Activated CD8-positive, alpha-beta memory T cell treated with anti-CD3 and anti-CD28 coated beads, Interleukin-2, amount 10 ng/mL, durations not matched to agents 7 days and 5 days (primary cell): ENCODE measurements at regions of chr7 and their contacts with region 1.

Region 1: GRCh38 chr7:123494193-123494796 is 40.1 kb downstream of the IQUB start:
- DNase-seq: no peak
- ATAC-seq: no peak
- H3K4me3 Mint-ChIP-seq: no peak overlapping the region
- H3K27ac Mint-ChIP-seq: no peak overlapping the region
- H3K4me1 Mint-ChIP-seq: no peaks in the 10 kb centered on the region
- H3K27me3 Mint-ChIP-seq: peaks cover 23% of the 10 kb centered on the region

Region 2: GRCh38 chr7:123534383-123535260 is 40.3 kb after region 1 on chr7 and contains the start of gene IQUB:
- CTCF ChIA-PET with region 1: interaction called, 22 read pairs
- DNase-seq: peak; percentile 98
- ATAC-seq: peak; percentile 84
- H3K4me3 Mint-ChIP-seq: peak within 1 kb of the TSS; percentile 90
- H3K27ac Mint-ChIP-seq: peak within 1 kb of the TSS; percentile 82
- H3K4me1 Mint-ChIP-seq: peaks cover 26% of the 10 kb centered on the region
- H3K27me3 Mint-ChIP-seq: peaks cover 25% of the 10 kb centered on the region
- total RNA-seq, gene IQUB: 0.07 TPM in 1 of 2 experiments, not detected in the other